Activated CD4-positive, alpha-beta T cell treated with anti-CD3 and anti-CD28 coated beads for 36 hours (primary cell): ENCODE measurements at regions of chr9 and their contacts with region 1.

Region 1: GRCh38 chr9:114108016-114108833 is 9.1 kb upstream of the KIF12 start:
- DNase-seq: peak; percentile 83
- ATAC-seq: peak; percentile 92
- H3K4me3 Mint-ChIP-seq: no peak overlapping the region
- H3K27ac Mint-ChIP-seq: no peak overlapping the region
- H3K4me1 Mint-ChIP-seq: no peaks in the 10 kb centered on the region
- H3K27me3 Mint-ChIP-seq: peaks cover 10% of the 10 kb centered on the region

Region 2: DNA sequence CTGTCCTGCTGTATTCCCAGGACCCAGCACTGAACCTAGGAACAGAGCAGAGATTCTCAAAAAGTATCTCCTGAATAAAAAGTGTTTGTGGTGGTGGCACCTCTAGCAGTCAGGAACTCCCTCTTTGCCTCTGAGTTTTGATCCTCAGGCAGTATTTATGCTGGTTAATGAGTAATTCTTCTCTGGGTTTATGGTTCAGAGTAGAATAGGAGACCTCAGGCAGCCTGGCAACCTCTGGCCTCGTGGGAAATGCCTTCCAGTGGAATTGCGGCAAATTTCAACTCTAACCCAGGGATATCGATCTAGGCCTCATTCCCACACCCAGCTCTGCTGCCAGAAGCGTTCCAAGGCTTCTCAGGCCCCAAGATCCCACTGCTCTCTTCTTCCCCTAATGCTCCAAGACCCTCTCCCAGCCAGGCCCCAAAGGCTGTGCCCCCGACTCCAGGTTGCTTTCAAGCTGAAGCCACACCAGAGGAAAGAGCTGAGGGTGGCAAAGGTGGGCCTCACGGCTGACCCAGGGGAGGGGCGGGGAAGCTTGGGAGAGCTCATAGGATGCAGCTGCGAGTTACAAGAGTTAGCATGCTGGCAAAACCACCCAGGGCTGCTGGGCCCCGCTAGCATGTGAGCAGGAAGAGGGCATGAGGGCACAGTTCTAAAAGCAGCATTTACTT is 720.5 kb before region 1 on chr9:
- CTCF ChIA-PET with region 1: no interaction called
- POLR2A ChIA-PET with region 1: no interaction called
- intact Hi-C with region 1: no loop called
- DNase-seq: no peak
- ATAC-seq: no peak
- H3K4me3 Mint-ChIP-seq: no peak overlapping the region
- H3K27ac Mint-ChIP-seq: no peak overlapping the region
- H3K4me1 Mint-ChIP-seq: no peaks in the 10 kb centered on the region
- H3K27me3 Mint-ChIP-seq: no peaks in the 10 kb centered on the region

Region 3: DNA sequence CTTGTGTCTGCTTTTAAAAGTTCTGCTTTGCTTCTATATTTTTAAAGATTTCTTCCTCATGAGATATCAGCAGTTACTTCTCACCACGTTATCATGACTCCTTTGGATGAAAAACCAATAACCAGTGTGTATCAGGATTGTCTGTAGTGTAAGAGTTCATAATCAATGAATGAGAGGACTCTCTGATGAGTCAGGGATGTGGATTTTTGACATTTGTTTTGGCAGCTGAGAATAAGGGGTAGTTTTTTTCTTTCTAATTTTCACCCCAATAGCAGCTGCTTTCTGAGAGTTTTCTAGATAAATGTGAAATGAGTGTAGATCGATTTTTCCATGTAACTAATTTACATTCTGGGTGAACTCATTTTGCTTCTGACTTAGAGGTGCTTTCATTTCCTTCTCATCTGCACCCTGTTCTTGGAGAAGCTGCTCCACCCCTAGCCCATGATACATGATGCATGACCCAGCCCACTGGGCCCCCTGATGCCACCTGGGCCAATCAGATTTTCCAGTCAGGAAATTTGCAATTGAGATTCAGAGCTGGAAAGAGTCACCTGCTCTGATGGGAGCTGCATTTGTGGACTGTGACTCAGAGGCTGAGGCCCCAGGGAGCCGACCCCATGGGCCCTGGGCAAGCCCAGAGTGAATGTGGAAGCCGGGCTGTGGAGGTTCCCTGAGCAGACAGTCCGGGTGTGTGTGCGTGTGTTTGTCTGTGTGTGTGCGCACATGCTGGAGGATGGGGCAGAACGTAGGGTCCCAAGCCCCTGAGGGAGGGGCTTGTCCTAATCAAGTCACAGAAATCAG is 485.4 kb before region 1 on chr9:
- CTCF ChIA-PET with region 1: no interaction called
- POLR2A ChIA-PET with region 1: no interaction called
- intact Hi-C with region 1: no loop called
- DNase-seq: peak; percentile 90
- ATAC-seq: peak; percentile 92
- H3K4me3 Mint-ChIP-seq: peak overlapping the region; percentile 58
- H3K27ac Mint-ChIP-seq: peak overlapping the region; percentile 98
- H3K4me1 Mint-ChIP-seq: peaks cover 57% of the 10 kb centered on the region
- H3K27me3 Mint-ChIP-seq: no peaks in the 10 kb centered on the region

Region 4: DNA sequence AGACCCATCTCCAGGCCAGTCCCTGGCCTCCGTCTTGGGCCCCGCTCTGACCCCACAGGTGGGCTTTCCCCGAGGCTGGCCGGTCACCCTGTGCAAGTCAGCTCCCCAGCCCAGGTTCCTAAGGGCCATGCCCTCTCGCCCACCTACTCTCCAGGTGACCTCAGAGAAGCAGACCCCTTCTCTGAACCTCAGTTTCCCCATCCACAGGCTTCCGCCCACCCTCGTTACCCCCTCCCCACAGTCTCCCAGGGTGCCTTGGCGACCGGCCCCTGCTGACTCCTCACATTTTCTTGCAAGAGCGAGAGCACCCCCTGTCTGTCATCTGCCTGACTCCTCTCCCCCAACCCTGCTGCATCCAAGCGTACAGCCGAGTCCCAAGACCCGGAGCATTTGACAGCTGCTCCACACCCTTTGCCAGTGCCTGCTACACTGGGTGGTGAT is 163.4 kb after region 1 on chr9:
- CTCF ChIA-PET with region 1: interaction called, 8 read pairs
- POLR2A ChIA-PET with region 1: no interaction called
- intact Hi-C with region 1: loop called in 1 of 2 experiments (anchors 5 kb)
- DNase-seq: peak; percentile 55
- ATAC-seq: no peak
- H3K4me3 Mint-ChIP-seq: no peak overlapping the region
- H3K27ac Mint-ChIP-seq: no peak overlapping the region
- H3K4me1 Mint-ChIP-seq: no peaks in the 10 kb centered on the region
- H3K27me3 Mint-ChIP-seq: no peaks in the 10 kb centered on the region

Region 5: GRCh38 chr9:114285166-114285867 is 177.1 kb after region 1 on chr9:
- CTCF ChIA-PET with region 1: interaction called, 33 read pairs
- POLR2A ChIA-PET with region 1: no interaction called
- intact Hi-C with region 1: loop called in 1 of 2 experiments (anchors 5 kb)
- DNase-seq: no peak
- ATAC-seq: no peak
- H3K4me3 Mint-ChIP-seq: no peak overlapping the region
- H3K27ac Mint-ChIP-seq: no peak overlapping the region
- H3K4me1 Mint-ChIP-seq: no peaks in the 10 kb centered on the region
- H3K27me3 Mint-ChIP-seq: no peaks in the 10 kb centered on the region

Region 6: DNA sequence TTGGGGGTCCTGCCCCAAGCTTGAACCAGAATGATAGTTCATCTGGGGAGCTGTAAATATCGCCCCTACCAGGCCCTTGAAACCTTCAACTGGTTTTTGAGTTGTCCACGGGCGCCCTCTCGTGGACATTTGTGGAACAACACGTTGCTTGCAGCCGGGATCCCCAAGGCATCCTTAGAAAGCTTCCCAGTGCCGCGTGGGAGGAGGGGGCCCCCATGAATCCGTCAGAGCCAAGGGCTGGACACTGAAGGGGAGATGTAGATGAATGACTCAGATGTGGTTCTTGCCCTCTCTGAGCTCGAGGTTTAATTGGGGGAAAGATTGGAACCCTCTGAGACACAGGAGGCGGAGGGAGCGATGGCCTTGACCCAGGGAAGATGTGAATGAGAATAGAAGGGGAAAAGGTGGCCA is 182.8 kb after region 1 on chr9:
- CTCF ChIA-PET with region 1: interaction called, 33 read pairs
- POLR2A ChIA-PET with region 1: no interaction called
- intact Hi-C with region 1: loop called (anchors 1 to 5 kb)
- DNase-seq: peak; percentile 83
- ATAC-seq: peak; percentile 42
- H3K4me3 Mint-ChIP-seq: no peak overlapping the region
- H3K27ac Mint-ChIP-seq: no peak overlapping the region
- H3K4me1 Mint-ChIP-seq: no peaks in the 10 kb centered on the region
- H3K27me3 Mint-ChIP-seq: peaks cover 2% of the 10 kb centered on the region

Region 7: GRCh38 chr9:114304416-114305188 is 196.4 kb after region 1 on chr9:
- CTCF ChIA-PET with region 1: interaction called, 4 read pairs
- POLR2A ChIA-PET with region 1: no interaction called
- intact Hi-C with region 1: loop called in 1 of 2 experiments (anchors 1 kb)
- DNase-seq: no peak
- ATAC-seq: no peak
- H3K4me3 Mint-ChIP-seq: no peak overlapping the region
- H3K27ac Mint-ChIP-seq: no peak overlapping the region
- H3K4me1 Mint-ChIP-seq: peaks cover 4% of the 10 kb centered on the region
- H3K27me3 Mint-ChIP-seq: no peaks in the 10 kb centered on the region